Calu3 (cell line): ENCODE measurements at regions of chr7 and their contacts with region 1.

Region 1: DNA sequence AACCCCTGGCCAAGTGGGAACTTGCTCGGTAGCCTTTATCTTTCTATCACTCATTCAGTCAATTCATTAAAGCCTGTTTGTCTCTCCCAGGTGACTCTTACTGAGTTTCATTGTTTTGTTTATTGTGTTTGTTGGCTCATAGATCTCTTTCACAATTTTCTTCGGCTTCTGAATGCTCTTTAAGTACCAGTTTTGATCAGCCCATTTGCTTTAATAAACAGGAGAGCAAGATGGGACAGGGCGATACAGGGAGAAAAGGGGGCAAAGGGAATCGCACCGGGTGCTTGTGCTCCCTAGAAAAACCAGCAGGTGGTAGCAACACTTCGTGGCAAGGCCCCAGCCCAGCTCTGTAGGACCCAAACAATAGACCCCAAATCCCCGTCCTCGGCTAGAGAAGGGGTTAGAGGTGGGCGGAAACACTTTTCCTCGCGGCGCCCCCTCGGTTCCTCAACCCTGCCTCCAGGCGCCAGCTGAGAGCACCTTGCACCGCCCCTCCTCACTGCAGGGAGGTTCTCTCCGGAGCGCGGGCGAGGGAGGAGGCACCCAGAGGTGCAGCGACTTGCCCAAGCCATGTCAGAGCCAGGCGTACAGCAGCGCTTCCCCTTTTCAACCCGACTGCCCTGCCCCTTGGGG is 1.0 kb upstream of the EPHB6 start:
- DNase-seq: peak; percentile 70
- H3K4me3 Mint-ChIP-seq: peak overlapping the region; percentile 91
- H3K27ac Mint-ChIP-seq: peak overlapping the region; percentile 69
- H3K4me1 Mint-ChIP-seq: peaks cover 21% of the 10 kb centered on the region
- H3K27me3 Mint-ChIP-seq: peaks cover 75% of the 10 kb centered on the region
- CTCF ChIP-seq: peak; percentile 85

Region 2: GRCh38 chr7:142646386-142647140 is 207.3 kb before region 1 on chr7:
- CTCF ChIA-PET with region 1: no interaction called
- intact Hi-C with region 1: no loop called
- DNase-seq: no peak
- H3K4me3 Mint-ChIP-seq: no peak overlapping the region
- H3K27ac Mint-ChIP-seq: no peak overlapping the region
- H3K4me1 Mint-ChIP-seq: no peaks in the 10 kb centered on the region
- H3K27me3 Mint-ChIP-seq: peaks cover 94% of the 10 kb centered on the region
- CTCF ChIP-seq: no peak

Region 3: GRCh38 chr7:142898377-142899170 is 44.7 kb after region 1 on chr7:
- CTCF ChIA-PET with region 1: no interaction called
- intact Hi-C with region 1: no loop called
- DNase-seq: no peak
- H3K4me3 Mint-ChIP-seq: no peak overlapping the region
- H3K27ac Mint-ChIP-seq: no peak overlapping the region
- H3K4me1 Mint-ChIP-seq: peaks cover 20% of the 10 kb centered on the region
- H3K27me3 Mint-ChIP-seq: peaks cover 23% of the 10 kb centered on the region
- CTCF ChIP-seq: no peak

Region 4: GRCh38 chr7:142960955-142961512 is 107.2 kb after region 1 on chr7:
- CTCF ChIA-PET with region 1: interaction called, 9 read pairs
- intact Hi-C with region 1: loop called (anchors 5 kb)
- DNase-seq: peak; percentile 43
- H3K4me3 Mint-ChIP-seq: no peak overlapping the region
- H3K27ac Mint-ChIP-seq: no peak overlapping the region
- H3K4me1 Mint-ChIP-seq: peaks cover 15% of the 10 kb centered on the region
- H3K27me3 Mint-ChIP-seq: peaks cover 49% of the 10 kb centered on the region
- CTCF ChIP-seq: peak; percentile 25

Region 5: GRCh38 chr7:143008007-143008901 is 154.4 kb after region 1 on chr7:
- CTCF ChIA-PET with region 1: interaction called, 7 read pairs
- intact Hi-C with region 1: loop called (anchors 1 kb)
- DNase-seq: peak; percentile 85
- H3K4me3 Mint-ChIP-seq: no peak overlapping the region
- H3K27ac Mint-ChIP-seq: no peak overlapping the region
- H3K4me1 Mint-ChIP-seq: peaks cover 7% of the 10 kb centered on the region
- H3K27me3 Mint-ChIP-seq: peaks cover 70% of the 10 kb centered on the region
- CTCF ChIP-seq: peak; percentile 93